Mammary epithelial cell (primary cell): ENCODE measurements at regions of chr1 and their contacts with region 1.

Region 1: DNA sequence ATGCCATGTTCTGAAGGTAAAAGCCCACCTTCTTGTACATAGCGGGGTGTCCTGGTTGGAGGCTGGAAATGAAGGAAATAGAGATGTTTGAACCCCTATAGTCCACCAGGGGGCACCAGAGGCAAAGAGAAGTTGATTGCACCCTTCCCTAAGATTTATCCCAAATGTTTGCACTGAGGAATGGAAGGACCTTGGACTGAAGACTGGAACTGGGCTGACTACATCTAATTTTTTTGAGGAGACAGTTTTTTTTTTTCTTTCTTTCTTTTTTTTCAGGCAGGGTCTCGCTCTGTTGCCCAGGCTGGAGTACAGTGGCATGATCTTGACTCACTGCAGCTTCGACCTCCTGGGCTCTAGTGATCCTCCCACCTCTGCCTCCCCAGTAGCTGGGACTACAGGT is 55.3 kb upstream of the EIF4G3 start:
- DNase-seq: peak; percentile 26
- H3K4me3 ChIP-seq: no peak overlapping the region
- H3K27ac ChIP-seq: no peak overlapping the region
- H3K4me1 ChIP-seq: no peaks in the 10 kb centered on the region
- H3K27me3 ChIP-seq: no peaks in the 10 kb centered on the region
- CTCF ChIP-seq: peak; percentile 50 to 69

Region 2: DNA sequence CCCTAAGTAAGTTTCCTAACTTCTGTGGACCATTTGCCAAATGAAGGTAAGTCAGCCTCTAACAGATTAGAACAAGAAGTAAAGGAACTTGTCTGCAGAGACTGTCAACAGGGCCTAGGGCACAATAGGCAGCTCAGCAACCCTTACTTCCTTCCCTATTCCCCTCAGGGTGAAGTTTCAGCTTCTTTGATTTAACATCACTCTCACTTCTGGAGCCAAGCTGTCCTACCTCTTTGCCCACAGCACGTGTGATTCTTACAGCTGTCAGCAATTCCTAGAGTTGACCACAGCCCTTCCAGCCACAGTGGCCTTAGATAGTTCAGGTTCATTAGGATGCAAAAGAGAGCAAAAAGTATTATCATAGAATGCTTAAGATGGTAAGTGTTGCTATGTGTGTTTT is 47.8 kb before region 1 on chr1:
- CTCF ChIA-PET with region 1: no interaction called
- dilution Hi-C with region 1: no loop called
- in situ Hi-C with region 1: no loop called
- intact Hi-C with region 1: no loop called
- DNase-seq: no peak
- H3K4me3 ChIP-seq: no peak overlapping the region
- H3K27ac ChIP-seq: no peak overlapping the region
- H3K4me1 ChIP-seq: no peaks in the 10 kb centered on the region
- H3K27me3 ChIP-seq: no peaks in the 10 kb centered on the region
- CTCF ChIP-seq: no peak

Region 3: DNA sequence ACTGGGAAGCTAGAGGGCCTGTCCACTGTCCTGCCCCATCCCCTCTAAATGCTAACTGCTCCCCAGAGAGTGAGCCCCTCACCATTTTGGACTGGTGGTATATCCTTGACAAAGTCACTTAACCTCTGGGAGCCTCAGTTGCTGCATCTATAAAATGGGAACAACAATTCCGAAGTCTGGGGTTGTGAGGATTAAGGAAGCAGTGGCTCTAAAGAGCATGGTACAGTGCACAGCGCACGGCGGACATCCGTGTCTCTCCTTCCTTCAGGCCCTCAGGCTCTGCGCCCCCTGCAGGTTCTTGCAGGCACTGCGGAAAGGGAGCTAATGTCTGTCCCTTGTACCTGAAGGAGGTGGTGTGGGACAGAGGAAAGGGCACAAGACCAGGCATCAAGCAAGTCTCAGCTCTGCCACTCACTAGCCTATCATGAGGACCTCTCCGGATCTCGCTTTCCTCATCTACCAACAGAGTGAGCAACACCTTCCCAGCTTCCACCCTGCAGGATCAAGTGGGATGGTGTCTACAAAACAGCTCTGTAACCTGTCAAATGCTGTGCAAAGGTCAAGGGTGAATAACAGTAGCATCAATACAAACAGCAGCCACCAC is 38.1 kb after region 1 on chr1:
- CTCF ChIA-PET with region 1: no interaction called
- dilution Hi-C with region 1: no loop called
- in situ Hi-C with region 1: no loop called
- intact Hi-C with region 1: loop called (anchors 1 kb)
- DNase-seq: no peak
- H3K4me3 ChIP-seq: no peak overlapping the region
- H3K27ac ChIP-seq: no peak overlapping the region
- H3K4me1 ChIP-seq: peaks cover 9% of the 10 kb centered on the region
- H3K27me3 ChIP-seq: no peaks in the 10 kb centered on the region
- CTCF ChIP-seq: peak; percentile 93 to 99

Region 4: GRCh38 chr1:21302747-21303715 is 71.0 kb after region 1 on chr1:
- CTCF ChIA-PET with region 1: no interaction called
- dilution Hi-C with region 1: no loop called
- in situ Hi-C with region 1: no loop called
- intact Hi-C with region 1: no loop called
- DNase-seq: peak; percentile 76
- H3K4me3 ChIP-seq: no peak overlapping the region
- H3K27ac ChIP-seq: peak overlapping the region; percentile 53
- H3K4me1 ChIP-seq: peaks cover 45% of the 10 kb centered on the region
- H3K27me3 ChIP-seq: no peaks in the 10 kb centered on the region
- CTCF ChIP-seq: peak in 1 of 2 donors; percentile 36

Region 5: GRCh38 chr1:21334214-21335087 is 102.4 kb after region 1 on chr1:
- CTCF ChIA-PET with region 1: interaction called, 4 read pairs
- dilution Hi-C with region 1: no loop called
- in situ Hi-C with region 1: no loop called
- intact Hi-C with region 1: loop called (anchors 1 kb)
- DNase-seq: peak; percentile 90
- H3K4me3 ChIP-seq: peak overlapping the region; percentile 25 to 46 (median 36)
- H3K27ac ChIP-seq: peak overlapping the region; percentile 48
- H3K4me1 ChIP-seq: peaks cover 33% of the 10 kb centered on the region
- H3K27me3 ChIP-seq: no peaks in the 10 kb centered on the region
- CTCF ChIP-seq: peak; percentile 91 to 92

Region 6: DNA sequence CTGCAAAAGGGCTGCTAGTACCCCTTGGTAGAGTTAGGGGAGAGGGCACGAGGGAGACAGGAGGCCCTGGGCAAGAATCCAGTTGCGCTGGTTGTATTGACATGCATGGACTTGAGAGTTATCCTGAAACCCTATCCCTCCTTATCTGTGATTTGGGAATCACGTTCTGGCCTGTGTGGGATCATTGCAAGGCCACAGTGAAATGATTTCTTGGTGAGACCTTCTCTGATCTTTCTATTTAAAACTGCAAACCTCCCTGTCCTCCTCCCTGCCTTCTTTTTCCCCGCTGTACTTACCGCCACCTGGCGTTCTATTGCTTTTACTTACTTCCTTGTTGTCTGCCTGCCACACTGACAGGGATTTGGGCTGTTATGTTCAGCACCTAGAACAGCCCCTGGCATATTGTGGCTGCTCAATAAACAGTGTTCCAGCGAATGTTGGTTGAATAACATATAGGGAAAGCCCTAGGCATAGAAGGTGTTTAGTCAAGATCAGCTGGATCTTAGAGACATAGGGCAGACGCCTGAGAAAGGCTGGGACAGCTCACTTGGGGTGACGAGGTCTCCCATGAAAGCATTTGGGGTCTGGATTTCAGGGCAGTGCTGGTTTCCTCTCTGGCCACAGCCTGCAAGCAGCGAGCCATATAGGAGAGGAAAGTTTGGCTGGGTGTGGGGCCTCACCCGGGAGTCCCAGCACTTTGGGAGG is 302.8 kb after region 1 on chr1:
- CTCF ChIA-PET with region 1: no interaction called
- dilution Hi-C with region 1: no loop called
- in situ Hi-C with region 1: no loop called
- intact Hi-C with region 1: loop called (anchors 1 kb)
- DNase-seq: peak; percentile 62
- H3K4me3 ChIP-seq: no peak overlapping the region
- H3K27ac ChIP-seq: no peak overlapping the region
- H3K4me1 ChIP-seq: no peaks in the 10 kb centered on the region
- H3K27me3 ChIP-seq: peaks cover 2% of the 10 kb centered on the region
- CTCF ChIP-seq: peak in 1 of 2 donors; percentile 31